Caco-2 (cell line): ENCODE measurements at regions of chr20 and their contacts with region 1.

Region 1: GRCh38 chr20:59495894-59496510 is 108.3 kb upstream of the PHACTR3 start:
- DNase-seq: peak; percentile 83 to 88
- H3K4me3 ChIP-seq: no peak overlapping the region
- H3K4me3 Mint-ChIP-seq: no peak overlapping the region
- H3K27ac Mint-ChIP-seq: no peak overlapping the region
- H3K4me1 ChIP-seq: no peaks in the 10 kb centered on the region
- H3K4me1 Mint-ChIP-seq: no peaks in the 10 kb centered on the region
- H3K27me3 ChIP-seq: peaks cover 5% of the 10 kb centered on the region; the same call in 1 of the 2 replicates
- H3K27me3 Mint-ChIP-seq: peaks cover 38% of the 10 kb centered on the region
- CTCF ChIP-seq: peak; percentile 98 to 99

Region 2: DNA sequence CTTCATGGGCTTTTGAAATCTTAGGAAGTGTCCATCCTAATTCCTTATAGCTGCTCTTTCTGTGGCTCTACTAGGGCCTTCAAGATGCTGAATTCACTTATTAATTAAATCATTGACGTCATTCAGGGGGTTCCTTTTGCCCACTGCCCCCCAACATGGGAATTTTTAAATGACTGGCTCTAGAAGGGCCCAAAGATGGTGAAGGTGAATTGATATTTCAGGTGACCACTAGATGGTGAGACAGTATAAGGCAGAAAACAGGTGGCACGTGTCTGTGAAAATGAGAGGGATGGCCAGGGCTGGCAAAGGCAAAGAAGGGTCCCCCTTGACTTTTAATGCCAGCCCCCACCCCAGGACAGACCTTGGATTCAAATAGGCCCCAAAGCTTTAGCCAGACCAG is 631.7 kb before region 1 on chr20:
- CTCF ChIA-PET with region 1: interaction called, 13 read pairs
- POLR2A ChIA-PET with region 1: no interaction called
- intact Hi-C with region 1: loop called (anchors 1 kb)
- DNase-seq: peak; percentile 43 to 51
- H3K4me3 ChIP-seq: no peak overlapping the region
- H3K4me3 Mint-ChIP-seq: no peak overlapping the region
- H3K27ac Mint-ChIP-seq: no peak overlapping the region
- H3K4me1 ChIP-seq: no peaks in the 10 kb centered on the region
- H3K4me1 Mint-ChIP-seq: no peaks in the 10 kb centered on the region
- H3K27me3 ChIP-seq: no peaks in the 10 kb centered on the region
- H3K27me3 Mint-ChIP-seq: peaks cover 25% of the 10 kb centered on the region
- CTCF ChIP-seq: peak; percentile 63 to 71

Region 3: GRCh38 chr20:58870239-58871014 is 625.6 kb before region 1 on chr20:
- CTCF ChIA-PET with region 1: interaction called, 10 read pairs
- POLR2A ChIA-PET with region 1: no interaction called
- intact Hi-C with region 1: no loop called
- DNase-seq: peak; percentile 83 to 93
- H3K4me3 ChIP-seq: no peak overlapping the region
- H3K4me3 Mint-ChIP-seq: no peak overlapping the region
- H3K27ac Mint-ChIP-seq: no peak overlapping the region
- H3K4me1 ChIP-seq: no peaks in the 10 kb centered on the region
- H3K4me1 Mint-ChIP-seq: peaks cover 6% of the 10 kb centered on the region
- H3K27me3 ChIP-seq: no peaks in the 10 kb centered on the region
- H3K27me3 Mint-ChIP-seq: peaks cover 17% of the 10 kb centered on the region
- CTCF ChIP-seq: peak; percentile 98 to 100

Region 4: GRCh38 chr20:59365611-59366285 is 130.3 kb before region 1 on chr20:
- CTCF ChIA-PET with region 1: no interaction called
- POLR2A ChIA-PET with region 1: no interaction called
- intact Hi-C with region 1: no loop called
- DNase-seq: no peak
- H3K4me3 ChIP-seq: no peak overlapping the region
- H3K4me3 Mint-ChIP-seq: no peak overlapping the region
- H3K27ac Mint-ChIP-seq: no peak overlapping the region
- H3K4me1 ChIP-seq: no peaks in the 10 kb centered on the region
- H3K4me1 Mint-ChIP-seq: no peaks in the 10 kb centered on the region
- H3K27me3 ChIP-seq: no peaks in the 10 kb centered on the region
- H3K27me3 Mint-ChIP-seq: peaks cover 6% of the 10 kb centered on the region
- CTCF ChIP-seq: no peak

Region 5: GRCh38 chr20:59439243-59439642 is 56.8 kb before region 1 on chr20:
- CTCF ChIA-PET with region 1: interaction called, 28 read pairs
- POLR2A ChIA-PET with region 1: no interaction called
- intact Hi-C with region 1: loop called (anchors 1 kb)
- DNase-seq: peak in 1 of 2 experiments; percentile 58
- H3K4me3 ChIP-seq: no peak overlapping the region
- H3K4me3 Mint-ChIP-seq: no peak overlapping the region
- H3K27ac Mint-ChIP-seq: no peak overlapping the region
- H3K4me1 ChIP-seq: peaks cover 7% of the 10 kb centered on the region; the same call in 1 of the 2 replicates
- H3K4me1 Mint-ChIP-seq: no peaks in the 10 kb centered on the region
- H3K27me3 ChIP-seq: peaks cover 2% of the 10 kb centered on the region; the same call in 1 of the 2 replicates
- H3K27me3 Mint-ChIP-seq: peaks cover 29% of the 10 kb centered on the region
- CTCF ChIP-seq: peak; percentile 41 to 69

Region 6: GRCh38 chr20:59455402-59456341 is 40.3 kb before region 1 on chr20:
- CTCF ChIA-PET with region 1: interaction called, 19 read pairs
- POLR2A ChIA-PET with region 1: no interaction called
- intact Hi-C with region 1: loop called (anchors 5 kb)
- DNase-seq: peak in 1 of 2 experiments; percentile 52
- H3K4me3 ChIP-seq: no peak overlapping the region
- H3K4me3 Mint-ChIP-seq: no peak overlapping the region
- H3K27ac Mint-ChIP-seq: no peak overlapping the region
- H3K4me1 ChIP-seq: peaks cover 10% of the 10 kb centered on the region; the same call in 1 of the 2 replicates
- H3K4me1 Mint-ChIP-seq: no peaks in the 10 kb centered on the region
- H3K27me3 ChIP-seq: no peaks in the 10 kb centered on the region
- H3K27me3 Mint-ChIP-seq: peaks cover 17% of the 10 kb centered on the region
- CTCF ChIP-seq: peak; percentile 86 to 91